Common myeloid progenitor, CD34-positive (primary cell): ENCODE measurements at regions of chr10 and their contacts with region 1.

Region 1: DNA sequence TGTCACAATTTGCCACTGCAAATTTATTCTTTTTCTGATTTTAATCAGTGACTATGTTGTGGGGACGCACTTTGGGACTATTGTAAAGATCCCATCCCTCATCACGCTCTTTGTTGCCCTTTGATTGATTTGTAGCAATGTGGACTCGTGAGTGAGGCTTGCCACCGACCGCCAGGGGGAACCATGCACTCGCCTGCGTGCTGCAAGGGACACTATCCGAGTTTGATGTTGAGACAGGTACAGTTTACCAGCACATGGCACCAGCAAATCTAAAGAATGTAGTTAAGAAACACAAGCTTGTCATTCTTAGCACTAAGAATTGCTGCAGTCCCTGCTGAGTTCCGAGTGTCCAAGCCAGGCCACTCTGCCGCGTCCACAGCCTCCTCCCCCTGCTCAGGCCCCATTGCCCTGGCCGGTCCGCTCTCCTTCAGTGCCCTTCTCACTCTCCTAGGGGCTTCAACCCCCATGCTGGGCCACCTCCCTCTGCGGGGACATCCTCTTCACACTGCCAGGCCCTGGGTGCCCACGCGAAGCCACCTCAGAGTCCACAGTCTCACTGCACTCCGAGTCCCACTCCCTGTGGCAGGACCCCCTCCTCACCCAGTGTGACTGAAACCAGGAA is 2.0 kb upstream of the SFTPA2 start:
- DNase-seq: peak; percentile 53 to 80 (median 77)
- H3K4me3 ChIP-seq: peak overlapping the region in 5 of 7 experiments; percentile 7 to 66 (median 43)
- H3K27ac ChIP-seq: no peak overlapping the region
- H3K4me1 ChIP-seq: peaks cover 0 to 7% (median 6%) of the 10 kb centered on the region in 4 experiments
- H3K27me3 ChIP-seq: peaks cover 0 to 7% (median 0%) of the 10 kb centered on the region in 5 experiments

Region 2: DNA sequence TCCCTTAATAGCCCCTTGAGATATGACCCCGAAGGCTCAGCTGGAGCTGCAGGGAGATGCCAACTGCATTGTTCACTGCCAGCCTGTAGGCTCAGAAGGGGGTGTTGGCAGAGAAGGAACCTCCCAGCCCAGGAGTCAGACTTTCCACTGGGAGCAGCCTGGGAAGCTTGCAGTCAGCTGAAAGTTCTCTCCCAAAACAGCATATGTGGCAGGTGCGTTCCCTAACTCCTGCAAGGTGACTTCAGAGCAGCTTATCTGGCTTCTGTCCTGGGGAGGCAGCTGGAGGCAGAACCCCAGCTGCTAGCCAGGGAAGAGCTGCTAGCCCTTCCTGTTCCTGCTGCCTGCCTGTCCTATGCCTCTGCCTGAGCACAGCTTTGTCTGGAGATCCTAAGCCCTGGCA is 10.1 kb before region 1 on chr10:
- CTCF ChIA-PET with region 1: interaction called, 14 read pairs
- POLR2A ChIA-PET with region 1: interaction called, 3 read pairs
- DNase-seq: no peak
- H3K4me3 ChIP-seq: no peak overlapping the region
- H3K27ac ChIP-seq: no peak overlapping the region
- H3K4me1 ChIP-seq: no peaks in the 10 kb centered on the region
- H3K27me3 ChIP-seq: peaks cover 0 to 3% (median 0%) of the 10 kb centered on the region in 5 experiments

Region 3: DNA sequence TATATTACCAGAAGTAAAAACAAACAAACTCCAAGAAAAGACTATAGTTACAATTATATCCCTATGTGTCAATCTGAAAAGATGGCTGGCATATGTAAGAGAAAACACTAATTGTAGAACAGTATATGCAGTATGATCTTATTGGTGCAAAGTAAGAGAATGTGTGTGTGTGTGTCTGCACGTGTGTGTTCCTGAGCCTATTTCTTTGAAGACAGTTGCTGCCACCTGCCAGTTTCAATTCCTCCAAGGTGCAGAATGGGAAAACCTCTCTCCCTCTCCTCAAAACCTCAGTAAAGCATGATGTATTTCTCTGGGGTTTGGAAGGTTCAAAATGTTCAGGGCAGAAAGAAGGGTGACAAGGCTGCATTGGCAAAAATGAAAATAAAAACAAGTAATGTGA is 39.7 kb after region 1 on chr10:
- CTCF ChIA-PET with region 1: no interaction called
- POLR2A ChIA-PET with region 1: no interaction called
- DNase-seq: no peak
- H3K4me3 ChIP-seq: no peak overlapping the region
- H3K27ac ChIP-seq: no peak overlapping the region
- H3K4me1 ChIP-seq: no peaks in the 10 kb centered on the region
- H3K27me3 ChIP-seq: peaks cover 0 to 1% (median 0%) of the 10 kb centered on the region in 5 experiments